GM23248 (cell line): ENCODE measurements at regions of chr12 and their contacts with region 1.

Region 1: GRCh38 chr12:104381731-104382480 is 74.8 kb upstream of the CHST11 start:
- DNase-seq: peak; percentile 83
- H3K4me3 ChIP-seq: peak overlapping the region; percentile 41; the same call in 1 of the 2 replicates
- H3K27ac ChIP-seq: no peak overlapping the region
- H3K4me1 ChIP-seq: peaks cover 4% of the 10 kb centered on the region
- H3K27me3 ChIP-seq: no peaks in the 10 kb centered on the region

Region 2: GRCh38 chr12:104478396-104479122 is 96.7 kb after region 1 on chr12:
- in situ Hi-C with region 1: no loop called
- DNase-seq: no peak
- H3K4me3 ChIP-seq: no peak overlapping the region
- H3K27ac ChIP-seq: no peak overlapping the region
- H3K4me1 ChIP-seq: no peaks in the 10 kb centered on the region; the same call in 1 of the 2 replicates
- H3K27me3 ChIP-seq: no peaks in the 10 kb centered on the region

Region 3: DNA sequence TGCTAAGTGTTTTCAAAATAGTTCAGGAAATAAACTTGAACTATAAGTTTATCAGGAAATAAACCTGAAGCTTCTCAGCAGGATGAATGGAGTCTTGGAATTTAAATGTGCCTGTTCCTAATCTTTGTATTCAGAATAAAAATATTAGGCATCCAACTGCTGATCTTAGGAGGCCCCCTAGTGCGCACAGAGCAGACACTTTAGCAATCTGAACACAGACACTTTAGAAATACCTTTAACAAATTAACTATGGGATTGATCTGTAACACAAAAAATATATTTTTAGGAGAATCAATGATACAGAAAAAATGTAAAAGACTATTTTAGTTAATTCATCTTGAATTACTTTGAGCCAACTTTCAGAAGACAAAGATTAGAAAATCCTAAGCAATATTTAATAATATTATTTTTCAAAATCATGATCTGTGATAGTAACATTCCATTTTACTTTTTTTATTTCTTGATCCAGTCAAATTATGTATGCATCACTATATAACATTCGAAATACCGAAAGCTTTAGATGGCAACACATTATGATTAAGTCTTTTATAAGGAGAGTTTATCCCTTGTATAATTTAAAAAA is 495.3 kb after region 1 on chr12:
- in situ Hi-C with region 1: loop called (anchors 10 kb)
- DNase-seq: peak; percentile 73
- H3K4me3 ChIP-seq: no peak overlapping the region
- H3K27ac ChIP-seq: no peak overlapping the region
- H3K4me1 ChIP-seq: no peaks in the 10 kb centered on the region
- H3K27me3 ChIP-seq: no peaks in the 10 kb centered on the region